Left lung (tissue), 14 donors: ENCODE measurements at regions of chr1 and their contacts with region 1.

Region 1: GRCh38 chr1:35564037-35564883 is 6.7 kb downstream of the NCDN start:
- DNase-seq: peak in 2 of 4 donors; percentile 76 to 79
- ATAC-seq: peak; percentile 69
- H3K4me3 ChIP-seq: no peak overlapping the region
- H3K27ac ChIP-seq: no peak overlapping the region
- H3K4me1 ChIP-seq: peaks cover 0 to 16% of the 10 kb centered on the region in 2 donors
- H3K27me3 ChIP-seq: no peaks in the 10 kb centered on the region
- CTCF ChIP-seq: peak; percentile 57 to 90

Region 2: GRCh38 chr1:35451125-35451528 is 113.1 kb before region 1 on chr1:
- intact Hi-C with region 1: loop called in 1 of 2 experiments (anchors 5 kb)
- DNase-seq: peak; percentile 47 to 86 (median 81)
- ATAC-seq: peak; percentile 81
- H3K4me3 ChIP-seq: no peak overlapping the region
- H3K27ac ChIP-seq: peak overlapping the region in 1 of 2 donors; percentile 85
- H3K4me1 ChIP-seq: peaks cover 41 to 95% of the 10 kb centered on the region in 2 donors
- H3K27me3 ChIP-seq: no peaks in the 10 kb centered on the region
- CTCF ChIP-seq: peak; percentile 76 to 86

Region 3: DNA sequence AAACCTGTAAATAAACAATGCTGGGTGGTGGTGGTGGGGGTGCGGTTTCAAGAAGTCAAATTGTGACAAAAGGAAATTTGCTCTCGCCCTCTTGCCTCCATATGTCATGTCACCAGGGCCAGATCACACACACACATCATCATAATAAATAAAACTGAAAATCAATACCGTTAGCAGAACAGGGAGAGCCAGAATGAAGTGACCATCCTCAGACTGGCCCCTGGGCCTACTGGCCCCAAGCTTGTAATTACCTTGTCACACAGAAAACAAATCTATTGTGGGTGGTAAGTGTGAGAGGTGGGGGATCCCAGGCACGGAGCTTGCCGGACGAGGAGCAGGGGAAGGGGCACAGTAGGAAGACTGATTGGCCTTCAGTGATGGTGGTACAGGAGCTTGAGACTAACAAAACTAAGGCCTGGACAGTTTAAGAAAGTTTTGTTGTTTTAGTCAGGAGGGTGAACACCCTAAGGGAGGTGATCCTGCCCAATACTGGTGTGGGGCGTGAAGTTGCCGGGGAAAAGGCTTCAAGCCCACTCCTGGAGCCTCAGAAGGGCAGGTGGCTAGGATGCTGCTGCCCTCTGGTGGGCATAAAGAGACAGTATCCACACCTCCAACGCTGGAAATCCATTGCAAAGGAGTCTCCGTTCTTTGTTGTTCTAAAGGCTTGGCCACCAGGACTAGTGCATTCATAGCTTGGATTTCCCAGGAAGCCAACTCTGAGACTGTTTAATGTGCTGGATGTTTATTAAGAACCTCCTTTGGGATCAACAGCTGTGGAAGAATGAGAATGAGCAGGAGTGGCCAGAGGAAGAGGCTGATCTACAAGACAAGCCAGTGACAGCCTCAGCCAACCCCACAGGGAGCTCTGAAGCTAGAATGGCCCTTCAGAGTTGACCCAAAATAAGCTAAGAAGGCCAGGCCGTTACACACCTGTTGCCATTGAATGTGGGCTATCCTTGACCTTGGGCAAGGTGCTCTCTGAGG is 162.5 kb after region 1 on chr1:
- intact Hi-C with region 1: loop called in 1 of 2 experiments (anchors 5 kb)
- DNase-seq: peak in 1 of 4 donors; percentile 75
- ATAC-seq: peak; percentile 98
- H3K4me3 ChIP-seq: no peak overlapping the region
- H3K27ac ChIP-seq: no peak overlapping the region
- H3K4me1 ChIP-seq: no peaks in the 10 kb centered on the region
- H3K27me3 ChIP-seq: no peaks in the 10 kb centered on the region
- CTCF ChIP-seq: peak; percentile 88 to 89